K562 (cell line): ENCODE measurements at regions of chr4 and their contacts with region 1.

Region 1: GRCh38 chr4:152735396-152735859 is 44.1 kb downstream of the TIGD4 start:
- DNase-seq: peak in 3 of 4 experiments; percentile 10 to 12 (median 11)
- ATAC-seq: peak; percentile 67
- H3K4me3 ChIP-seq: no peak overlapping the region
- H3K27ac ChIP-seq: no peak overlapping the region
- H3K4me1 ChIP-seq: no peaks in the 10 kb centered on the region
- H3K27me3 ChIP-seq: peaks cover 5 to 13% of the 10 kb centered on the region in 2 experiments; a peak in 3 of 5 replicates
- CTCF ChIP-seq: peak; percentile 23 to 68 (median 37); a peak in 4 of 6 replicates
- EP300 ChIP-seq: no peak
- POLR2A ChIP-seq: no peak
- RAD21 ChIP-seq: peak; percentile 79 to 80

Region 2: DNA sequence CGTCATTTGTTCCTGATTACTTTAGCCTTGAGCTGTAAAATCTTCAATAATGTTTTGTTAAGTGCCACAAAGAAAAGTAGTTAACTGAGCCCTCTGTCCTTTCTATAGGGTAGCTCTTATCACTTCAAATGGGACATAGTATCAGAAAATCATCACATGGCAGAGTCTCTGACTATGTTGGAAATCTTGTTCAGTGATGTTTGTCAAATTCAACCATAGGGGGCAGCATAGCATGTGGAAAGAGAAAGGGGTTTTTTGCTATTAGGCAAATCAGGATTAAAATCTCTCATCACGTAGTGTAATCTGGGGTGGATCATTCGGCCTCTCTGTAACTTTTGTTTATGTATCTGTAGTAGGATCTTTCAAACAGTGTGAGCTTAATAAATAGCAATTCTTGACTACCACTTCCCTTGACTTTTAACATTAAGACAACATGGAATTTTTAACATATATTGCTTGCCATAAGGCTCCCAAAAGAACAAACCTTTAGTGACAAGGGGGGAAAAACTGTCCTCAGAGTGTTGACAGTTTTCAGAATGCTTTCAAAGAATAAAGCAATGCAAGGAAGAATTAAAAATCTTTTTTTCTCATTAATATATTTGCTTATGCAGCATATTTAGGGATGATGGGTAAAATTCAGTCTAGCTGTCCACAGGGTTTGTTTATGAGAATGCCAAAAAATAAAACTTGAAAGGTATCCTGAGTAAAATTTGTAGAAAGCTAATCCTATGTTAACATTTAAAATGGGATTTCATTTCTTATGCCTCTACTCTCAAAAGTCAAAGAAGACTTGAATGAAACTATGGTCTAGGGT is 326.7 kb before region 1 on chr4:
- CTCF ChIA-PET with region 1: interaction called, 3 read pairs
- POLR2A ChIA-PET with region 1: no interaction called
- in situ Hi-C with region 1: no loop called
- intact Hi-C with region 1: loop called (anchors 5 kb)
- DNase-seq: peak; percentile 13 to 28 (median 18)
- ATAC-seq: peak; percentile 71
- H3K4me3 ChIP-seq: no peak overlapping the region
- H3K27ac ChIP-seq: no peak overlapping the region
- H3K4me1 ChIP-seq: no peaks in the 10 kb centered on the region
- H3K27me3 ChIP-seq: no peaks in the 10 kb centered on the region
- CTCF ChIP-seq: peak; percentile 29 to 68 (median 64); a peak in 5 of 6 replicates
- EP300 ChIP-seq: no peak
- POLR2A ChIP-seq: no peak
- RAD21 ChIP-seq: peak; percentile 61 to 63

Region 3: DNA sequence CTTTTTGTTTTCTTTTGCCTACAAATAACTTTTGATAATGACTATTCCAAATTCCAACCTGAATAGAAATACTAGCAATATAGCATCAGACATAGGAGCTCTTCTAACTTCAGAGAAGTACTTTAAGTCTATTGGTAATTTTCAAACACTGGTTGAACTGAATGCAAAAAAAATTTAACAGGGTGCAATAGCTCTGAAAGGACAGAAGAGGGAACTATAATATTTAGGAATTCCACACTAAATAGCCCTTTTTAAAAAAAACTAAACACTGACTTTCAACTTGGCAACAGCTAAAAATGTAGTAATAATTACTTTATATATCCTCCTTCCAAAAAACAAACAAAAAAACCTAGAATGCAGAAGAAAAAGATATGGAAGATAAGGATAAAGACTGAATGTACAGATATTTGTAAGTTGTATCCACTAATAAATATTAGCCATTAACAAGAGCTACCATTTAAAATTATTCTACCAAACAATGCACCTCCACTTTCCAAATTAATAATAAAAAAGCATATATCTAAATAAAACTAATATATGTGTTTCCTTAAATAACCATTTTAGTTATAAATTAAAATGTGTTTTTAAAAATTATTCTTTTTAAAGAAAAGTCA is 280.9 kb before region 1 on chr4:
- CTCF ChIA-PET with region 1: interaction called, 9 read pairs
- POLR2A ChIA-PET with region 1: no interaction called
- in situ Hi-C with region 1: no loop called
- intact Hi-C with region 1: loop called (anchors 5 kb)
- DNase-seq: peak in 2 of 4 experiments; percentile 6 to 17
- ATAC-seq: 0 out of 3 replicates have a peak, but pooled peaks have one; percentile 35
- H3K4me3 ChIP-seq: no peak overlapping the region
- H3K27ac ChIP-seq: no peak overlapping the region
- H3K4me1 ChIP-seq: no peaks in the 10 kb centered on the region; a peak in 1 of 5 replicates
- H3K27me3 ChIP-seq: no peaks in the 10 kb centered on the region
- CTCF ChIP-seq: peak; percentile 32 to 75 (median 37); a peak in 4 of 6 replicates
- EP300 ChIP-seq: no peak
- POLR2A ChIP-seq: no peak
- RAD21 ChIP-seq: peak; percentile 67 to 73

Region 4: GRCh38 chr4:152779513-152780266 is 44.3 kb after region 1 on chr4 and contains the starts of genes ARFIP1 and TIGD4:
- CTCF ChIA-PET with region 1: no interaction called
- POLR2A ChIA-PET with region 1: no interaction called
- in situ Hi-C with region 1: no loop called
- intact Hi-C with region 1: no loop called
- DNase-seq: peak; percentile 94 to 97 (median 94)
- ATAC-seq: peak; percentile 99
- H3K4me3 ChIP-seq: peak within 1 kb of the TSS; percentile 96
- H3K27ac ChIP-seq: peak within 1 kb of the TSS; percentile 86
- H3K4me1 ChIP-seq: peaks cover 5 to 7% of the 10 kb centered on the region in 2 experiments; a peak in 3 of 5 replicates
- H3K27me3 ChIP-seq: no peaks in the 10 kb centered on the region
- CTCF ChIP-seq: peak; percentile 18 to 38 (median 34); a peak in 3 of 6 replicates
- EP300 ChIP-seq: no peak
- POLR2A ChIP-seq: peak; percentile 90
- RAD21 ChIP-seq: 0 out of 4 replicates have a peak, but pooled peaks of 1 of the 2 experiments have one; percentile 9
- polyA plus RNA-seq, gene ARFIP1: 19.9 to 22.9 TPM
- polyA plus RNA-seq, gene TIGD4: 0.07 to 0.10 TPM